Colonic mucosa (tissue), 4 donors: ENCODE measurements at regions of chr20 and their contacts with region 1.

Region 1: DNA sequence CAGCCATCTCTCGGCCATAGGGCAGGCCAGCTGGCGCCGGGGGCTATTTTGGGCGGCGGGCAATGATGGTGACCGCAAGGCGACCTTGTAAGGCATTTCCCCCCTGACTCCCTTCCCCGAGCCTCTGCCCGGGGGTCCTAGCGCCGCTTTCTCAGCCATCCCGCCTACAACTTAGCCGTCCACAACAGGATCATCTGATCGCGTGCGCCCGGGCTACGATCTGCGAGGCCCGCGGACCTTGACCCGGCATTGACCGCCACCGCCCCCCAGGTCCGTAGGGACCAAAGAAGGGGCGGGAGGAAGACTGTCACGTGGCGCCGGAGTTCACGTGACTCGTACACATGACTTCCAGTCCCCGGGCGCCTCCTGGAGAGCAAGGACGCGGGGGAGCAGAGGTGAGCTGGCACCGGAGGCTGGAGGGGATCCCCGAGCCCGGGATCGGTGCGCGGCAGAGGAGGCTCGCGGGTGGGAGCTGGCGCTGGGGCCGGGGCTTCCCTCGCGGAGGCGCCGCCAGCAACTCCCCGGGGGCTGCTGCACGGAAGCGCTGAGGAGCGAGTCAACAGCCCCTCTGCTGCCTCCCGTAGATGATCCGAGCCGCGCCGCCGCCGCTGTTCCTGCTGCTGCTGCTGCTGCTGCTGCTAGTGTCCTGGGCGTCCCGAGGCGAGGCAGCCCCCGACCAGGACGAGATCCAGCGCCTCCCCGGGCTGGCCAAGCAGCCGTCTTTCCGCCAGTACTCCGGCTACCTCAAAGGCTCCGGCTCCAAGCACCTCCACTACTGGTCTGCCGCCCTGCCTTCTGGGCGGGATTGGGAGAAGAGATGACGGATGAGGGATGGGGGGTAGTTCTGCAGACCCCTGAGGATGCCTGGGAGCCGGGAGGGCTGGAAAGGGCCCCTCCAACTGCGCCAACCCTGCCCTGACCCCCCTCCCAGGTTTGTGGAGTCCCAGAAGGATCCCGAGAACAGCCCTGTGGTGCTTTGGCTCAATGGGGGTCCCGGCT is at the starts of genes CTSA and NEURL2:
- DNase-seq: peak; percentile 97
- H3K4me3 ChIP-seq: peak within 1 kb of the TSS; percentile 94
- H3K27ac ChIP-seq: peak within 1 kb of the TSS; percentile 71
- H3K4me1 ChIP-seq: peaks cover 18% of the 10 kb centered on the region
- H3K27me3 ChIP-seq: no peaks in the 10 kb centered on the region
- CTCF ChIP-seq: no peak
- total RNA-seq, gene CTSA: 273 to 366 TPM
- total RNA-seq, gene NEURL2: 3.5 to 4.0 TPM

Region 2: GRCh38 chr20:45300961-45301360 is 590.3 kb before region 1 on chr20:
- intact Hi-C with region 1: no loop called
- DNase-seq: no peak
- H3K4me3 ChIP-seq: no peak overlapping the region
- H3K27ac ChIP-seq: no peak overlapping the region
- H3K4me1 ChIP-seq: no peaks in the 10 kb centered on the region
- H3K27me3 ChIP-seq: no peaks in the 10 kb centered on the region
- CTCF ChIP-seq: no peak

Region 3: DNA sequence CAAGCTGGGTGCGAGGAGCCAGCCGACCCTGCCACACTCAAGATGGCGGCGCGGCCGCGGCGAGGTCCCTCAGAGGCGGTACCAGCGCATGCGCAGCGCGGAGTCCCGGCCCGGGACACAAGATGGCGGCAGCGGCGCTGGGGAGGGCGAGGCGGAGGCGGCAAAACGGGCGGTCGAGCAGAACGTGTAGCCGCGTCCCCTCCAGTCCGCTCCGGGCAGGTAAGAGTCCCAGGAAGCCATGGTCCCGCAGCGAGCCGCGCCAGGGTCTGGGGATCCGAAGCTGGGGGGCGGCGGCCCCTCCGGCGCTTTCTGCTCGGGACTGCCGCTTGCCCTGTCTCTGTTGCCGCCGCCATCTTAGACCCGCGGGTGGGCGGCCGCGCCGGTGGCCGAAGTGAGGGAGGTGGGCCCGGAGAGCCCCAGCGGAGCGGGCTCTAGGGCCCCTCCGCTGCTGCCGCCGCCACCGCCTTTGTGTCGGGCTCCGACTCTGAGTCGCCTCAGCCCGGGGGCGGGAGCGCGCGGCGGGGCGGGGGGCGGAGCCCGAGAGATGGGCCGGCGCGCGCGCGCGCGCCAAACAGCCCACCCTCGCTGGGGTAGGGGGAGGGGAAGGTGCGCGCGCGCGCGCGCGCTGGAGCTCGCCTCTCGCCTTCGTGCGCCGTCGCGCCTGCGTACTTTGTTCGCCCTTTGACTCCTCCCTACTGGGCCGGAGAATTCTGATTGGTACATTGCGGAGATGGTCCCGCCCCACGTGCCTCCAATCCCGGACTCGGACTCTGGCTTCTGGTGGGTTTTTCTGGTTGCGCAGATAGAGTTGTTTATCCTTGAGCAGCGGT is 43.5 kb after region 1 on chr20 and contains the start of gene PCIF1:
- intact Hi-C with region 1: loop called (anchors 5 kb)
- DNase-seq: peak; percentile 98
- H3K4me3 ChIP-seq: peak within 1 kb of the TSS; percentile 98
- H3K27ac ChIP-seq: peak within 1 kb of the TSS; percentile 100
- H3K4me1 ChIP-seq: no peaks in the 10 kb centered on the region
- H3K27me3 ChIP-seq: no peaks in the 10 kb centered on the region
- CTCF ChIP-seq: no peak
- total RNA-seq, gene PCIF1: 28.9 to 33.6 TPM

Region 4: DNA sequence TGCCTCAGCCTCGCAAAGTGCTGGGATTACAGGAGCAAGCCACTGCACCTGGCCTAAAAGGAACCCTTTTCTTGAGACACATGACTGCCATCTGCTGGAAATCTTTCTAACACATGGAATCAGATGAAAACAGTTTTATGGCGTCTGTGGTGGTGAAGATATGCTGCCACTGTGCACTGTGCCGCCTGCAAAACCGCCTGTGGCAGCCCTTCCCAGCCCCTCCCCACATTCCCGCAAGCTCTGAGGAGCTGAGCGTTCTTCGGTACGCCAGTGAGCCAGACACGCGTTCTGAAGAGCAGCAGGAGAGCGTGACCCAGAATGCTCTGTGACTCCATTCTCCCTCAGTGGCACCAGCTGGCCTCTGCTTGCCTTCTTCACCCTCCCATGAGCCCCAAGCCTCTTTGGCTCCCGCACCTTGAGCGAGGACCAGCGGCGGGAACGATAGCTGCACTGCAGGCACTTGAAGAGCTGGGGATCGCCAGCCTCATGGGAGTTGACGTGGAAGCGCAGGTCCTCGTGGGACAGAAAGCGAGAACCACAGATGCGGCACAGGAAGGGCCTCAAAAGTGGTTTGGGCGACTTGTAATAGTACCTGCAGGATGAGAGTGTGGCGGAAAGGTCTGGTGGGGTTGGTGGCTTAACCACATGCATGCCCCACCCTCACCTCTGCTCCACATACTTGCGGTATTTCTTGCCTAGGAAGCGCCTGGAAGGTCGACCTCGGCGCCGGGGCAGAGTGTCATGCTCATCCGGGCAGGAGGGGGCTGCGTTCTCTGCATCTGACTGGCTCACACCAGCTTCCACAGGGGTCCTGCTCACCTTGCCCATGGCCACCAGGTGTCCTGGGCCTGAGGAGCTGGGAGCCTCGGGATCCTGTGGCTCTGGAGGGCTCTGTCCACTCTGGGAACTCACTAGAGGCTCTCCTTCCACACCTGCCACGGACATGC is 72.0 kb after region 1 on chr20:
- intact Hi-C with region 1: loop called (anchors 5 kb)
- DNase-seq: no peak
- H3K4me3 ChIP-seq: no peak overlapping the region
- H3K27ac ChIP-seq: no peak overlapping the region
- H3K4me1 ChIP-seq: no peaks in the 10 kb centered on the region
- H3K27me3 ChIP-seq: no peaks in the 10 kb centered on the region
- CTCF ChIP-seq: peak; percentile 35